ENCODE measurements at regions of chr18 and their contacts with region 1.

Region 1: GRCh38 chr18:62131301-62131909 is 55.5 kb downstream of the PIGN start:
- H3K4me3 Mint-ChIP-seq: no peak overlapping the region
- H3K27ac Mint-ChIP-seq: no peak overlapping the region
- H3K4me1 Mint-ChIP-seq: peaks cover 14% of the 10 kb centered on the region
- H3K27me3 Mint-ChIP-seq: no peaks in the 10 kb centered on the region

Region 2: GRCh38 chr18:61551586-61551985 is 579.8 kb before region 1 on chr18:
- intact Hi-C with region 1: loop called (anchors 2 kb)
- H3K4me3 Mint-ChIP-seq: no peak overlapping the region
- H3K27ac Mint-ChIP-seq: no peak overlapping the region
- H3K4me1 Mint-ChIP-seq: peaks cover 5% of the 10 kb centered on the region
- H3K27me3 Mint-ChIP-seq: peaks cover 9% of the 10 kb centered on the region

Region 3: DNA sequence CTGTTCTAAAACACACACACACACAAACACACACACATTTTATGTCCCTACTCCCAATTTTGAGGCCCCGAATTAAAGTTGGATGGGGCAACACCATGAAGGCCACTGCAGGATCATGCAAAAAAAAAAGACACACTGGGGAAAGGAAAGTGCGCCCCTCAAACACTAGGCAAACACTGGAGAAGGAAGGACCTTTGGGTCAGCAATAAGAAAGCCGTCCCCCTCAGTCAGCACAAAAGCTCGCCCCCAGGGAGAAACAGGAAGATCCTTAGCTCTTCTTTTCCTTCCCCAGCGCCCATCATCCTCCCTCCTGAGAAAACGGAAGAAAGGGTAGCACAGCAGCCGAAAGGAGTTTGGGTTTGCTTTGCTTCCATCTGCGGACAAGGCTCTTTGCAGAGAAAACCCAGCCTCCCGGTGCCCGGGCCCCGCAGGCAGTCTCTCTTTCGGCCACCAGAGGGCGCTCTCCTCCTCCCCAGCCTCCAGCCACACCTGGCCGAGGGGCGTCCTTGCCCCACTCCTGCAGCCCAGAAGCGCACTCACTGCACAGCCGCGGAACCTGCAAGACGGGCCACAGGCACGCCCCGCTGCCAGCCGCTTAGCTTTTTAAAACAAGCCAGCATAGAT is 549.7 kb before region 1 on chr18:
- intact Hi-C with region 1: loop called (anchors 2 kb)
- H3K4me3 Mint-ChIP-seq: peak overlapping the region; percentile 18
- H3K27ac Mint-ChIP-seq: no peak overlapping the region
- H3K4me1 Mint-ChIP-seq: peaks cover 24% of the 10 kb centered on the region
- H3K27me3 Mint-ChIP-seq: peaks cover 60% of the 10 kb centered on the region

Region 4: DNA sequence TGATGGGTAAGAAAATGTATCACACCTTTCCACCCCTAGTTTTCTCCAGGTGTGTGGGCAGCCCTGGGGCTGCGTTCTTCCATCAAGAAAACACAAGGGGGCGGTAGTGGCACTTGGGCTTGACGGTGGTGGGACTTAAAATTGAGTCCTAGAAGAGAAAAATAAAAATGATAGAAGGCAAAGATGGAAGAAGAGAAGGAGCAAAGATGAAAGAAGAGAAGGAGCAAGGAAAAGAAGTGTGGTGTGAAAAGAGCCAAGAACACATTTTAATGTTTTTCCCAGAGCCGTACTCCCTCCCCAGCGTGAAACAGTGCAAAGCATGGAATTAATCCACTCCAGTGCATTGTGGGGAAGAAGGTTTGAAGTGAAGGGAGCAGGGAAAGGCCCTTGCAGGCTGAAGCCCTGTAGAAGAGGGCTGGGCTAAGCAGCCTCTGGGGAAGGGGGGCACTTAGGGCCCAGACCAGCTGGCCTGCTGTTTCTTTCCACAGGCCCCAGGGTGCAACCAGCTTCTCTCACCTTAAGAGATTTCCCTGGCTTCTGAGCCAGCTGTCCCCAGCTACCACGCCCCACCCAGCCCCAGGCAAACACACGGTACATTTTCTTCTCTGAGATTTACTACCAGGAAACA is 495.4 kb before region 1 on chr18:
- intact Hi-C with region 1: loop called (anchors 1 kb)
- H3K4me3 Mint-ChIP-seq: no peak overlapping the region
- H3K27ac Mint-ChIP-seq: no peak overlapping the region
- H3K4me1 Mint-ChIP-seq: no peaks in the 10 kb centered on the region
- H3K27me3 Mint-ChIP-seq: peaks cover 10% of the 10 kb centered on the region

Region 5: GRCh38 chr18:61765097-61765496 is 366.3 kb before region 1 on chr18:
- intact Hi-C with region 1: no loop called
- H3K4me3 Mint-ChIP-seq: no peak overlapping the region
- H3K27ac Mint-ChIP-seq: no peak overlapping the region
- H3K4me1 Mint-ChIP-seq: no peaks in the 10 kb centered on the region
- H3K27me3 Mint-ChIP-seq: peaks cover 20% of the 10 kb centered on the region

Region 6: GRCh38 chr18:61901323-61901986 is 229.9 kb before region 1 on chr18:
- intact Hi-C with region 1: loop called (anchors 5 kb)
- H3K4me3 Mint-ChIP-seq: no peak overlapping the region
- H3K27ac Mint-ChIP-seq: no peak overlapping the region
- H3K4me1 Mint-ChIP-seq: no peaks in the 10 kb centered on the region
- H3K27me3 Mint-ChIP-seq: peaks cover 59% of the 10 kb centered on the region

Region 7: DNA sequence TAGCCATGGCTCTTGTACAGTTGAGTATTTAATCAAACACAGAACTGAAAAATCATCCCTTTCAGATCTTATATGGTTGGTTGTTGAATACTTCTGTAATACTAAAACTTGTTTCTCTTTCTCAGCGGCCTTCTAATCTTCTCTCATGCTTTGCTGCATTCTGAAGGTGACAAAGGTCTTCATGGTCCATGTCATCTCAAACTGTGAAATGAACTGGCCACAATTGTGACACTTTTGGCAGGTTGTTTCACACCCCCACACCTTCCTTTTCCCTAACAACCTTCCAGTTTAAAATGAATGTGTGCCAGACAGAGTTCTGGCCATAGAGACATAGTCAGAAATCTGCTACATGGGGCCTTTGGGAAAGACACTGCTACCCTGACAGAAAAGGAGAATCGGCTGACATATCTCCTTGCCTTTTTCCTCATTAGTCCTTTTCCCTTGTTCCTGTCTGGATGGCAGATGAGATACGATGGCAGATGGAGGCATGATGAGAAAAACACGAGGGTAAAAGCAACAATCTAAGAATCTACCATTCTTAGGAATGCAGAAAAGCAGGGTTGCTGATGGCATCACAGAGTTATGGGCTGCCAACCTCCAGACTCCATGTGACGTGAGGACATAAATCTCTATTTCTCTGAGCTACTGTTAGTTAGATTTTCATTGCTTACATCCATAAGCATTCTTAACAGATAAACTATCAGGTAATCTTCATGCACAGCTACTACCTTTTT is 51.1 kb before region 1 on chr18:
- intact Hi-C with region 1: no loop called
- H3K4me3 Mint-ChIP-seq: no peak overlapping the region
- H3K27ac Mint-ChIP-seq: no peak overlapping the region
- H3K4me1 Mint-ChIP-seq: no peaks in the 10 kb centered on the region
- H3K27me3 Mint-ChIP-seq: no peaks in the 10 kb centered on the region

Measured in dendritic cell treated with granulocyte-macrophage colony-stimulating factor and Interleukin-4, amounts not matched to agents 40 ng/mL and 50 ng/mL, for 4 days (primary cell).